ENCODE measurements at regions of chr12 and their contacts with region 1.

Region 1: GRCh38 chr12:22684140-22685118 is 59.5 kb downstream of the ETNK1 start:
- DNase-seq: peak; percentile 11
- ATAC-seq: peak; percentile 64
- H3K4me3 ChIP-seq: no peak overlapping the region
- H3K27ac ChIP-seq: no peak overlapping the region
- H3K4me1 ChIP-seq: peaks cover 18% of the 10 kb centered on the region
- H3K27me3 ChIP-seq: no peaks in the 10 kb centered on the region
- CTCF ChIP-seq: peak; percentile 50 to 61 (median 56); a peak in 4 of 6 replicates
- EP300 ChIP-seq: no peak
- POLR2A ChIP-seq: no peak
- RAD21 ChIP-seq: peak; percentile 63

Region 2: DNA sequence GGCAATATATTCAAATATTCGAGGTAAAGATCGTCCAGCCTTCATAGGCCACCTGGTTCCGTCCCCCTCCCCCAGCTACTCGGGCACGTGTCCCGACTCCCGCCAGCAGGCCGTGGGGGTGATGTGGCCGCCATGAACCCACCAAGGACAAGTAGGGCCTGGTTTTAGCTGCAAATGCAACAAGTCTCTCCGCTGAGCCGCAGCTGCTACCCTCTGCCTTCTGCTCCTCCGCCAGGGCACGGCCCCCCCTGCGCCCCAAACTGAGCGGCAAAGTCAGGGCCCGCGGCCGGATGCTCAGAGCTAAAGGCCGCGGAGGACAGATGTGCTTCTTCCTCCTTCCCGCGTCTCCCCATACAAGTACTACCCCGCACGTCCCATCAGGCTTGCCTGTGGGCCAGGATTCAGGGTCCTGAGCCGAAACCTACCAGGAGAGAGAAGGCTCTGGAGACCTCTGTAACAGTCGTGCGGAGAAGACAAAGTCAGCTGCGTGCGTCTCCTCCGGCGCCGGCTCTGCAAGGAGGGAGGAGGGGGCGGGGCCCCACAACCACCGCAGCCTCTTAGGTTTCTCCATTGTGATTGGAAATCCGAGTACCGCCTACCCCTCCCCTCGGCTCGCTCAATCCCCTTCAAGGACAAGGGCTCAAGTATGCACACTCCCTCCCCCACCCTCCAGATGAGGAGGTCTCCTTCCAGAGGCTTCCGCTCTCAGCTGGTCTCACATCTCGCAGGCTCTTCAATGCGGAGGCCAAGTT is 1026.9 kb before region 1 on chr12 and contains the start of gene LDHB:
- CTCF ChIA-PET with region 1: no interaction called
- POLR2A ChIA-PET with region 1: no interaction called
- RAD21 ChIA-PET with region 1: no interaction called
- SMC1A ChIA-PET with region 1: no interaction called
- in situ Hi-C with region 1: no loop called
- intact Hi-C with region 1: no loop called
- DNase-seq: peak; percentile 81
- ATAC-seq: peak; percentile 96
- H3K4me3 ChIP-seq: peak within 1 kb of the TSS; percentile 91
- H3K27ac ChIP-seq: peak within 1 kb of the TSS; percentile 87
- H3K4me1 ChIP-seq: no peaks in the 10 kb centered on the region; the same call in none of the 2 replicates
- H3K27me3 ChIP-seq: no peaks in the 10 kb centered on the region; a peak in 1 of 4 replicates
- CTCF ChIP-seq: no peak
- EP300 ChIP-seq: no peak
- POLR2A ChIP-seq: peak; percentile 96
- RAD21 ChIP-seq: no peak
- polyA plus RNA-seq, gene LDHB: 3,645 to 3,692 TPM

Region 3: GRCh38 chr12:22670762-22671161 is 13.7 kb before region 1 on chr12:
- CTCF ChIA-PET with region 1: interaction called, 17 read pairs
- POLR2A ChIA-PET with region 1: no interaction called
- RAD21 ChIA-PET with region 1: interaction called, 3 read pairs
- SMC1A ChIA-PET with region 1: interaction called, 5 read pairs
- in situ Hi-C with region 1: no loop called
- intact Hi-C with region 1: no loop called
- DNase-seq: no peak
- ATAC-seq: no peak
- H3K4me3 ChIP-seq: no peak overlapping the region
- H3K27ac ChIP-seq: no peak overlapping the region
- H3K4me1 ChIP-seq: no peaks in the 10 kb centered on the region
- H3K27me3 ChIP-seq: no peaks in the 10 kb centered on the region
- CTCF ChIP-seq: no peak; a peak in 1 of 6 replicates
- EP300 ChIP-seq: no peak
- POLR2A ChIP-seq: no peak
- RAD21 ChIP-seq: peak; percentile 19; the same call in 1 of the 2 replicates

Region 4: GRCh38 chr12:22709292-22709691 is 24.9 kb after region 1 on chr12:
- CTCF ChIA-PET with region 1: interaction called, 53 read pairs
- POLR2A ChIA-PET with region 1: no interaction called
- RAD21 ChIA-PET with region 1: interaction called, 4 read pairs
- SMC1A ChIA-PET with region 1: interaction called, 4 read pairs
- in situ Hi-C with region 1: no loop called
- intact Hi-C with region 1: no loop called
- DNase-seq: peak; percentile 15
- ATAC-seq: peak; percentile 73
- H3K4me3 ChIP-seq: no peak overlapping the region
- H3K27ac ChIP-seq: no peak overlapping the region
- H3K4me1 ChIP-seq: no peaks in the 10 kb centered on the region
- H3K27me3 ChIP-seq: no peaks in the 10 kb centered on the region
- CTCF ChIP-seq: peak; percentile 37 to 54 (median 45); a peak in 5 of 6 replicates
- EP300 ChIP-seq: no peak
- POLR2A ChIP-seq: no peak
- RAD21 ChIP-seq: peak; percentile 66

Region 5: DNA sequence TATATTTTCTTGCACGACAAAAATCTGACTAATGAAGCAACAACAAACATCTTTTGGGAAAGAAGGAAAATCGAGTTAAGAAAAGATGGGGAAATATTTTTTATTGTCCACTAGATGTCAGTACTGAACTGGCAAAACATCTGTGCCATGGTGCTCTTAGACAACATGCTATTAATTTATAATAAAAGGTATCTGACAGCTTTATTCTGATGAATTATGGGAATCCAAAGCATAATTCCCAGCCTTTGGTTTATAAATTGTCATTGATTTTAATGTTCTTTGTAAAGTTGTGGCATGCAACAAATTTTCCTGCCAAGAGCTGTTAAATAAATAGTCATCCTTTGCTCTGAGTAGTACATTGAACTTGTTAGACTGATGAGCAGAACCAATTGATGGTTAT is 171.7 kb after region 1 on chr12:
- CTCF ChIA-PET with region 1: interaction called, 31 read pairs
- POLR2A ChIA-PET with region 1: no interaction called
- RAD21 ChIA-PET with region 1: interaction called, 12 read pairs
- SMC1A ChIA-PET with region 1: interaction called, 6 read pairs
- in situ Hi-C with region 1: no loop called
- intact Hi-C with region 1: loop called (anchors 2 kb)
- DNase-seq: no peak
- ATAC-seq: no peak
- H3K4me3 ChIP-seq: no peak overlapping the region
- H3K27ac ChIP-seq: no peak overlapping the region
- H3K4me1 ChIP-seq: no peaks in the 10 kb centered on the region
- H3K27me3 ChIP-seq: no peaks in the 10 kb centered on the region; a peak in 1 of 4 replicates
- CTCF ChIP-seq: peak; percentile 35 to 56 (median 45); a peak in 5 of 6 replicates
- EP300 ChIP-seq: no peak
- POLR2A ChIP-seq: no peak
- RAD21 ChIP-seq: peak; percentile 62

Region 6: DNA sequence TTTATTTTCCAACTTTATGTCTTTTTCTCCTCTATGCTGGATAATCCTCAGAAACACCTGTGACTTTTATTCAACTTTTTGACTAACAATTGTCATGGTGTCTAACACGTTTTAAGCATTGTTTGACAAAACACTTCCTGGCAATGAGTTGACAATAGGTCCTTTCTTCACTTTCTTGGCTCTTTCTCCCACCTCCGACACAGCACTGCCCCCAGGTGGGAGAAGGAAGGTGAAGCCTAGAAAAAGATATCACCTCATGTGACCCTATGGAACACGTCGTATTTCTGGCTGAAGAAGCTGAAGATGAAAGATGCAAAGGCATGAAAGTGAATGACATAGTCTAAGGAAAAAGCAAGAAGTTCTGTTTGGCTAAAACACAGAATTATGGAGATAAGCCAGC is 370.6 kb after region 1 on chr12:
- CTCF ChIA-PET with region 1: no interaction called
- POLR2A ChIA-PET with region 1: no interaction called
- RAD21 ChIA-PET with region 1: no interaction called
- SMC1A ChIA-PET with region 1: no interaction called
- in situ Hi-C with region 1: no loop called
- intact Hi-C with region 1: loop called (anchors 10 kb)
- DNase-seq: no peak
- ATAC-seq: peak; percentile 52; the same call in 1 of the 3 replicates
- H3K4me3 ChIP-seq: no peak overlapping the region
- H3K27ac ChIP-seq: no peak overlapping the region
- H3K4me1 ChIP-seq: no peaks in the 10 kb centered on the region
- H3K27me3 ChIP-seq: no peaks in the 10 kb centered on the region
- CTCF ChIP-seq: peak; percentile 25 to 44 (median 31); a peak in 4 of 6 replicates
- EP300 ChIP-seq: no peak
- POLR2A ChIP-seq: no peak
- RAD21 ChIP-seq: peak; percentile 56

Measured in GM12878 (cell line).